PC-9 (cell line): ENCODE measurements at regions of chr2 and their contacts with region 1.

Region 1: DNA sequence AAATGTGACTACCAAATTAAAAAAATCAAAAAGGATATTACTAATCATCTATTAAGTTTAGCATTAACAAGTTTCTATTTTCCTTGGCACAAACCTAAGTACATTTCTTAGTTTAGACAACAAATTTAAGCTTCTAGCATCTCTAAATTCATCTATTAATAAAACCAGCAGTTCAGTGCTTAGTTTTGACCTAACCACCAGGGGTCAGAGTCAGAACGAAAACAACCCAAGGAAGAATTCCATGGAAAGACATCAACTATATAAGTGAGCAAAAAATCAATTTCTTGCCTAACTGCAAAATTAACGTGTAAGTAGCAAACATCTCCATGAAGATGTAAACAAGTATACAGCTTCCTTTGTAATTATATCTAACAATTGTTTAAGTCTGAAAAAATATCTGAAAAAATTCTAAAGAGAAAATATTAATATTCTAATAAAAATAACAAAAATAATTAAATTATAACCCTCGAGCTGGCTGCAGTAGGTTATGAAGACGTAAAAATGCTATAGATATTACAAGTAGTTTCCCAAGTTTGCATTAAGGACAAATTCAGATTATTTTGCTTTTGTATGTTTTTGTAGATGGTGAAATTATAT is 83.7 kb downstream of the CERKL start:
- DNase-seq: peak; percentile 19 to 49
- H3K4me3 ChIP-seq: no peak overlapping the region
- H3K27ac ChIP-seq: no peak overlapping the region
- H3K4me1 ChIP-seq: no peaks in the 10 kb centered on the region
- H3K27me3 ChIP-seq: no peaks in the 10 kb centered on the region
- CTCF ChIP-seq: peak; percentile 86

Region 2: GRCh38 chr2:181077128-181077709 is 496.0 kb before region 1 on chr2:
- CTCF ChIA-PET with region 1: no interaction called
- POLR2A ChIA-PET with region 1: no interaction called
- intact Hi-C with region 1: loop called (anchors 10 kb)
- DNase-seq: peak in 1 of 2 experiments; percentile 63
- H3K4me3 ChIP-seq: no peak overlapping the region
- H3K27ac ChIP-seq: no peak overlapping the region
- H3K4me1 ChIP-seq: no peaks in the 10 kb centered on the region
- H3K27me3 ChIP-seq: no peaks in the 10 kb centered on the region
- CTCF ChIP-seq: peak; percentile 95

Region 3: GRCh38 chr2:181104512-181105115 is 468.6 kb before region 1 on chr2:
- CTCF ChIA-PET with region 1: no interaction called
- POLR2A ChIA-PET with region 1: no interaction called
- intact Hi-C with region 1: loop called (anchors 10 kb)
- DNase-seq: peak in 1 of 2 experiments; percentile 28
- H3K4me3 ChIP-seq: no peak overlapping the region
- H3K27ac ChIP-seq: no peak overlapping the region
- H3K4me1 ChIP-seq: peaks cover 27% of the 10 kb centered on the region
- H3K27me3 ChIP-seq: no peaks in the 10 kb centered on the region
- CTCF ChIP-seq: peak; percentile 90

Region 4: GRCh38 chr2:181528441-181528840 is 44.8 kb before region 1 on chr2:
- CTCF ChIA-PET with region 1: no interaction called
- POLR2A ChIA-PET with region 1: no interaction called
- intact Hi-C with region 1: no loop called
- DNase-seq: no peak
- H3K4me3 ChIP-seq: no peak overlapping the region
- H3K27ac ChIP-seq: no peak overlapping the region
- H3K4me1 ChIP-seq: no peaks in the 10 kb centered on the region
- H3K27me3 ChIP-seq: no peaks in the 10 kb centered on the region
- CTCF ChIP-seq: no peak

Region 5: GRCh38 chr2:181683518-181684453 is 110.5 kb after region 1 on chr2:
- CTCF ChIA-PET with region 1: interaction called, 12 read pairs
- POLR2A ChIA-PET with region 1: no interaction called
- intact Hi-C with region 1: no loop called
- DNase-seq: peak in 1 of 2 experiments; percentile 72
- H3K4me3 ChIP-seq: no peak overlapping the region
- H3K27ac ChIP-seq: no peak overlapping the region
- H3K4me1 ChIP-seq: no peaks in the 10 kb centered on the region
- H3K27me3 ChIP-seq: no peaks in the 10 kb centered on the region
- CTCF ChIP-seq: no peak

Region 6: DNA sequence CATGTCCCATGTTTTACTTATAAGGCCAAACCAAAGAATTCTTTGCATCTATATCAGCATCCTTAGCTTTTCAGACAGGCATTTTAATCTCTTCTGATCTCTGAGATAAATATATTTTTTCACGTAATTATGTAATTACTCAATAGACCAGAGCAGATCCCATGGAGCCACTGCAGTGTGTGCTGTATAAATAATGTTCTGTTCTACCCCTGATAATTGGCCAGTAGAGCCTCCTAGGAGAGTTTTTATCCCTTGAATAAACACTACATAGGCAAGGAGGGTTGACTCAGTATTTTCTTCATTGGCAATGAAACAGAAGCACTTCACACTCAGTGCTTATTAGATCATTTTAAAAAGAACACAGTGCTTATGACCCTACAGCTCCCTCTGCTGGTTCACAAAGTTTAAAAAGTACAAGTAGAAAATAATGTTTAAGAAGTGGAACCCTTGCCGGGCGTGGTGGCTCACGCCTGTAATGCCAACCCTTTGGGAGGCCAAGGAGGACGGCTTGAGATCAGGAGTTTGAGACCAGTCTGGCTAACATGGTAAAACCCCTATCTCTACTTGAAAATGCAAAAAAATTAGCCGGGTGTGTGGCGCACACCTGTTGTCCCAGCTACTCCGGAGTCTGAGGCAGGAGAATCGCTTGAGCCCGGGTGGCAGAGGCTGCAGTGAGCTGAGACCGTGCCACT is 504.4 kb after region 1 on chr2:
- CTCF ChIA-PET with region 1: interaction called, 3 read pairs
- POLR2A ChIA-PET with region 1: no interaction called
- intact Hi-C with region 1: loop called (anchors 1 kb)
- DNase-seq: peak; percentile 47 to 76
- H3K4me3 ChIP-seq: no peak overlapping the region
- H3K27ac ChIP-seq: no peak overlapping the region
- H3K4me1 ChIP-seq: 0 out of 2 replicates have a peak, but pooled peaks cover 4% of the 10 kb centered on the region
- H3K27me3 ChIP-seq: no peaks in the 10 kb centered on the region
- CTCF ChIP-seq: peak; percentile 98

Region 7: DNA sequence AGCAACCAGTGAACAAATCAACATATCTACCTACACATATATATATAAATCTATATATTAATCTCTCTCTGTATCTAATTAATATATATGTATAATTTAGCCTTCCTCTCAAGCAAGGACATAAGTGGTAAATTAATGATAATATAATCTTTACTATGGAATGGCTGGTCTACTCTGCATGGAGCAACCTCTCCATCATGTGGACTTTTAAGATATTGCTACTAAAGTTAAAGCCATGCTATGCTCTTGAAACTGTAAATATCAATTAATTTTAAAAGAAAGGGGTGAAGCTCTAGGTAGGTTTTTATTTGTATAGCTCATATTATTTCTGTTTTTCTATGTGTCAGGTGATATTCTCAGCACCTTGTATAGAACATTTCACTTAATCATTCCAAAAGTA is 559.4 kb after region 1 on chr2:
- CTCF ChIA-PET with region 1: no interaction called
- POLR2A ChIA-PET with region 1: no interaction called
- intact Hi-C with region 1: loop called (anchors 5 kb)
- DNase-seq: no peak
- H3K4me3 ChIP-seq: no peak overlapping the region
- H3K27ac ChIP-seq: no peak overlapping the region
- H3K4me1 ChIP-seq: no peaks in the 10 kb centered on the region
- H3K27me3 ChIP-seq: no peaks in the 10 kb centered on the region
- CTCF ChIP-seq: peak; percentile 58